Activated CD4-positive, alpha-beta T cell treated with anti-CD3 and anti-CD28 coated beads, Interleukin-2, amount 10 ng/mL, durations not matched to agents 24 days and 14 days (primary cell): ENCODE measurements at regions of chr1 and their contacts with region 1.

Region 1: GRCh38 chr1:111633736-111634247 is 14.2 kb downstream of the RAP1A start:
- DNase-seq: no peak
- H3K4me3 Mint-ChIP-seq: no peak overlapping the region
- H3K27ac Mint-ChIP-seq: no peak overlapping the region
- H3K4me1 Mint-ChIP-seq: peaks cover 61% of the 10 kb centered on the region
- H3K27me3 Mint-ChIP-seq: no peaks in the 10 kb centered on the region

Region 2: GRCh38 chr1:111696330-111696729 is 62.5 kb after region 1 on chr1:
- intact Hi-C with region 1: loop called (anchors 2 kb)
- DNase-seq: no peak
- H3K4me3 Mint-ChIP-seq: no peak overlapping the region
- H3K27ac Mint-ChIP-seq: no peak overlapping the region
- H3K4me1 Mint-ChIP-seq: peaks cover 45% of the 10 kb centered on the region
- H3K27me3 Mint-ChIP-seq: no peaks in the 10 kb centered on the region

Region 3: DNA sequence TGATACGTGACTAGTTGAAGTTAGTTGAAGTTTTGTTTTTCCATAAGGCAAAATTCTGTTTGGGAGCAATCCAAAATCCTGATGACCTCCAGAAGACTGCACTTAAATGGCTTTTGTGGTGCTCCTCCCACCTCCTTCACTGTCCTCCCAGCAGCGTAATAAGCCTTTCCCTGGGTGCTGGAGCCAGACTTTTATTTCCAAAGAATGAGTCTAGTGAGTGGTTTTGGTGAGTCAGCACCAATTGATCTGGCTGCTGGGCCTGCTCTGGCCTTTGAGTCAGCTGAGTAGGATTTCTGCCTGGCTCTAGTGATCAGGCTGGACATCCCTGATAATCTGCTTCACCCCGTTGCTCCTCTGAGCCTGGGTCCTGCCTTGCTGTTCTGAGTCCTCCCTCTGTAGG is 377.4 kb after region 1 on chr1:
- intact Hi-C with region 1: no loop called
- DNase-seq: no peak
- H3K4me3 Mint-ChIP-seq: no peak overlapping the region
- H3K27ac Mint-ChIP-seq: no peak overlapping the region
- H3K4me1 Mint-ChIP-seq: no peaks in the 10 kb centered on the region
- H3K27me3 Mint-ChIP-seq: no peaks in the 10 kb centered on the region